ENCODE measurements at regions of chr12 and their contacts with region 1.

Region 1: GRCh38 chr12:49342066-49342913 is 4.4 kb upstream of the DNAJC22 start:
- DNase-seq: peak; percentile 90
- H3K4me3 Mint-ChIP-seq: no peak overlapping the region
- H3K27ac Mint-ChIP-seq: no peak overlapping the region
- H3K4me1 Mint-ChIP-seq: peaks cover 48% of the 10 kb centered on the region
- H3K27me3 Mint-ChIP-seq: peaks cover 78% of the 10 kb centered on the region

Region 2: DNA sequence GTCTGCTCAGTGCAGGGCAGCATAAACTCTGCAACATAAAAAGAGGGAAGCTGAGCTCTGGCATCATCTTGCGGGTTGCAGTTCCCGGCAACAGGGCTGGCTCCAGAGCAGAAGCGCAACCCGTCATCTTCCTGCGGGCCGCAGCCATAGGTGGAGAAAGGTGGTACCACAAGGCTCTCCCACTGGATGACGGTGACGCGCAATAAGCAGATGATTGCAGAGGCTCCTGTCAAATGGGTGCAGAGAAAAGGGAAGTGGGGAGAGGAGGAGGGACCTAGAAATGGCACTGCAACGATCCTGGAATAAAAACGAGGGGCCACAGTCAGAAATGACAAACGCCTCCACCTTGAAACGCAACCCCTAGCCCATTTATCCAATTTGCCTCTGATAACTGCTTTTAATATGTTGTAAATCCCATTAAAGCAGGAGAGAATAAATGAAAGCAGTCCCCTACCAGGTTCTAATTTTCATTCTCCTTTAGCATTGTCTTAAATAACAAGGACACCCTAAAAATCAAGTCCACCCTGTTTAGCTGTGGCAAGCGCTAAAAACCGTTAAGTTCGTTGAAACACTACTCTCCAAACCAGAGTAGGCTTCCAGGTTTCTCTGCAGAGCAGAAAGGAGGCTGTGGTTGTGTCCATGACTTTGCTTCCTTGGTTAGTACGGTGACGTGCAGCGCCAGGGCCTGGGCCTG is 108.3 kb before region 1 on chr12:
- CTCF ChIA-PET with region 1: no interaction called
- intact Hi-C with region 1: no loop called
- DNase-seq: peak; percentile 62
- H3K4me3 Mint-ChIP-seq: peak overlapping the region; percentile 85
- H3K27ac Mint-ChIP-seq: peak overlapping the region; percentile 81
- H3K4me1 Mint-ChIP-seq: peaks cover 12% of the 10 kb centered on the region
- H3K27me3 Mint-ChIP-seq: no peaks in the 10 kb centered on the region

Region 3: DNA sequence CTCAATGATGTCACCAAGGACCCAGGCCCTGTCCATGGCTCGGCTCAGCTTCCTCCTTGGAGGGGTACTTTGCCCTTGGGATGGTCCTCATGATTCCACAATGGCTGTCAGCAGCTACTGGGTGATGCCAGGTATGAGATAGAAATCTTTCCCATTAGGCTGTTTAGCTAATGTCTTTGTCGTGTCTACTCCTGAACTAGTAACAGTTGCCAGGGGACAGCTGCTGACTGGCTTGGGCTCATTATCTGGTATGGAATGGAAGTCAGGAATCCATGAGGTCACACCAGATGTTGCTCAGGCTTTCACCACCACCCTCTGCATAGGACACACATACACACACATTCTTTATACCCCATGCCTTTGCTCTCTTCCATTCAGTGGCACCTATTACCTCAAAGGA is 38.1 kb before region 1 on chr12:
- CTCF ChIA-PET with region 1: interaction called, 153 read pairs
- intact Hi-C with region 1: no loop called
- DNase-seq: no peak
- H3K4me3 Mint-ChIP-seq: no peak overlapping the region
- H3K27ac Mint-ChIP-seq: no peak overlapping the region
- H3K4me1 Mint-ChIP-seq: peaks cover 4% of the 10 kb centered on the region
- H3K27me3 Mint-ChIP-seq: peaks cover 21% of the 10 kb centered on the region

Region 4: DNA sequence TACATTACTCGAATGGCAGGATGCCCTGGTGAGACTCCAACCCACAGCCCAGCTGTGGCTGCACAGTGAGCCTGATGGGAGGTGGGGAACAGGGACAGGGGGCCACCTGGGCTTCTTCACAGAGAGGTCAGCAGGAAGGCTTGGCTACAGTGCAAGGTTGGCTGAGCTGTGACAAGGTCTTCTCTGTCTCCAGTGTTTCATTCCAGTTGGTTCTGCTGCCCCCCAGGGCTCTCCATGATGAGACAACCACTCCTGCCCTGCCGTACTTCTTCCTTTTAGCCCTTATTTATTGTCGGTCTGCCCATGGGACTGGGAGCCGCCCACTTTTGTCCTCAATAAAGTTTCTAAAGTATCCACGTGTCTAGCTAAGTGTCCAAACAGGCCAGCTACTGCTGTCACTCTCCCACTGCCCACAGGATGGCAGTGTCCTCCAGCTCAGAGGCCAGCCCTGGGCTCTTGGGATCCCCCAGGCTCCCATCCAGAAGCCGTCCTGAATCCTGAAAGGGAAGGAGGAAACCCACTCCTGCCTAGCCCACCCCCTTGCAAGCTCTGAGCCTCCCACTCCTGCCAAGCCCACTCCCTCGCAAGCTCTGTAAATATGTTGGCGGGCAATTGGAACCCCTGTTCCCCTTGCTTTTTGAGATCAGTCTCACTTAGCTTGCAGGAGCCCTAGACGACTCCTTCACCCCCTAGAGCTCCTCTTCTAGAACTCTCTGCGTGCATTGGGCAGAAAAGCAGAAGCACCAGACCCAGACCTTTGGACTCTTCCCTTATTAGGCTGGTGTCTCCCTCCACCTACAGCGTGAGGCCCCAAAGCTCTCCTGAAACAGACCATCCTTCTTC is 10.7 kb before region 1 on chr12:
- CTCF ChIA-PET with region 1: interaction called, 28 read pairs
- intact Hi-C with region 1: no loop called
- DNase-seq: no peak
- H3K4me3 Mint-ChIP-seq: no peak overlapping the region
- H3K27ac Mint-ChIP-seq: no peak overlapping the region
- H3K4me1 Mint-ChIP-seq: peaks cover 12% of the 10 kb centered on the region
- H3K27me3 Mint-ChIP-seq: peaks cover 41% of the 10 kb centered on the region